Tibial artery (tissue), 4 donors: ENCODE measurements at regions of chr1 and their contacts with region 1.

Region 1: DNA sequence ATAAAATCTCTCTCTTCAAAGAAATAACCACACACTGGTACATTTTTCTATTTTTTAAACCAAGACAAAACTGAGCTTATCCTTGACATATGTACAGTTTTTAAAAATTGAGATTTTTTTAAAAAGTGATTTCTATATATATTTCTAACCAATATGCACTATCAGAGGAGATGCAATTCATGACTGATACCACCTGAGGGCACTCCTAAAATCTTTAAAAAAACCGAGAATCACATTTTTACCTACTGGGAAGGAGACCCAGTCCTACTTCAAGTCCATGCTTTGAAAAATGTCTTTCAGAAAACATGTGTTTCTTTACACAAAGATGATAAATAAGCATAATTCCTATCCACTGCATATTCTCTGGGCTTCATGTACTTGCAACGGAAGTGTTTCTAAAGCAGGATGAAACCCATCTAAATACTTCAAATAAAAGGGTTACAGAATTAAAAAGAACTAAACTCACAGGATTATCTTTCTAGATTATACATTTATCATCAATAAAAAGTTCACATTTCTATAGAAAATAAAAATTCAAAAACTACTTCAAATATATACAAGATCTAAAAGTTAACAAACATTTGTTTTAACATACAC is 98.6 kb downstream of the ENAH start:
- DNase-seq: no peak
- H3K4me3 ChIP-seq: no peak overlapping the region
- H3K27ac ChIP-seq: no peak overlapping the region
- H3K4me1 ChIP-seq: peaks cover 0 to 33% (median 3%) of the 10 kb centered on the region in 4 donors
- H3K27me3 ChIP-seq: no peaks in the 10 kb centered on the region
- CTCF ChIP-seq: peak; percentile 57 to 62

Region 2: DNA sequence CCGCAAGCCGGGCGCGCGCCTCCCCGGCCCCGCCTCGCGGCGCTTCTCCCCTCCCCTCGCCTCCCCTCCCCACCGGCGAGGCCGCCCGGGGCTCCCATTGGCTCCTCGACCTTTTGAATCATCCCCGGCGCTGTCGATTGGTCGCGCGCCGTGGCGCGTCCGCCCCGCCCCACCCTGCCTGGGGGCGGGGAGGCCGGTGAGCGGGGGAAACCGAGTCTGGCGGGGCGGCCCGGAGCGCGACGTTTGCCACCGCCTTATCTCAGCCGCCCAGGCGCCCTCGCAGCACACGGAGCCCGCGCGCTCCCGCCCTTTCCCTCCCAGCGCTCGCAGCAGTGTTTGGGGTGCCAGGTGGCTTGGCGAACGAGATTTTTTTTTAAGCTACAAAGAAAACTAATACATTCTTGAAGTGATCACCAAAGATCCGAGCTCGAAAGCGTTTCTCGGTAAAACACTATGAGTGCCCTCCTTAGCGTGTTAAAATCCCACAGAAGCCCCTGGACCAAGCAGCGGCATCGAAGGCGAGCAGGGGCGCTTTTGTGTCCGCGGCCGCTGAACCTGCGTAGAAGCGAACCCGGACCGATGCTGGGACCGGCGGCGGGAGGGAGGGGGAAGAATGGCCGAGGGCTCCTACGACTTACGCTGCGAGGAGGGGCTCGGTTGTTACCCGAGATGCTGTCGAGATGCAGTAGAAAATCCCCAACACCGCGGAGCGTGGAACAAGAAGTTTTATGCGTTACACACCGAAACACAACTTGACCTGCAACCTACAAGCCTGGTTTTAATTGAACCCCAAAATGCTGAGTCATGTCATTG is 126.0 kb before region 1 on chr1:
- intact Hi-C with region 1: no loop called
- DNase-seq: peak; percentile 91 to 97
- H3K4me3 ChIP-seq: peak overlapping the region; percentile 95 to 98
- H3K27ac ChIP-seq: peak overlapping the region; percentile 92 to 96
- H3K4me1 ChIP-seq: peaks cover 0 to 53% (median 27%) of the 10 kb centered on the region in 4 donors
- H3K27me3 ChIP-seq: no peaks in the 10 kb centered on the region
- CTCF ChIP-seq: no peak

Region 3: DNA sequence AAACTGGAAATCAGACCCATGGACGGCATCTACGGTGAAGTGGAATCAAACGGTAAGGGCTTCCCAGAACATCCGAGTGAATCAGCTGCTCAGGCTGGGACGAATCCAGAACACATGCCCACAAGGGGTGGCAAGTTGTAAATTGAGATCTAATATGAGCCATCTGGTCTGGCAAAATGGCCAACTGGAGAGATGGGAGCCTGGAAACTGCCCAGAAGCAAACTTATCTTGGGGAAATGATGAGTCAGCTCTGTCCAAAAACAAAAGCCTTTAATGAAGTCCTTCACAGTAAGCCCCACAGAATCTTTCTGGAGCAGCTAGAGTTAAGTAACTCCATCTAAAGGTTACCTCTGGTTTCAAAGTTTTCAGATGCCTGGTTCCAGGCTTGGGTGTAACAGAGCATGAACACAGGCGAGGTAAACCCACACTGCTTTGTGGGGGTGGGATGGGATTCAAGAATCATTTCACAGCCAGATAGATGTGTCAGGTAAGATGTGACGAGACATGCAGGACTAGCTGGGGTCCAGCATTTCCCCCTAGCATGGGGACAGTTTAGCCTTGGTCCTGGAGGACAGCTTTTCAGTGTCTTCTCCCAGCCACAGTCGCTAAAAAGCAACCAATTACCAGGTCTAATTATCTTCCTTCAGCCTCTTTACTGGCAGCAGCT is 212.8 kb after region 1 on chr1:
- intact Hi-C with region 1: loop called (anchors 10 kb)
- DNase-seq: peak; percentile 56 to 69
- H3K4me3 ChIP-seq: no peak overlapping the region
- H3K27ac ChIP-seq: peak overlapping the region; percentile 58 to 60
- H3K4me1 ChIP-seq: peaks cover 0 to 55% (median 51%) of the 10 kb centered on the region in 4 donors
- H3K27me3 ChIP-seq: no peaks in the 10 kb centered on the region
- CTCF ChIP-seq: no peak